Cardiac septum (tissue), 1 donor: ENCODE measurements at regions of chr9 and their contacts with region 1.

Region 1: DNA sequence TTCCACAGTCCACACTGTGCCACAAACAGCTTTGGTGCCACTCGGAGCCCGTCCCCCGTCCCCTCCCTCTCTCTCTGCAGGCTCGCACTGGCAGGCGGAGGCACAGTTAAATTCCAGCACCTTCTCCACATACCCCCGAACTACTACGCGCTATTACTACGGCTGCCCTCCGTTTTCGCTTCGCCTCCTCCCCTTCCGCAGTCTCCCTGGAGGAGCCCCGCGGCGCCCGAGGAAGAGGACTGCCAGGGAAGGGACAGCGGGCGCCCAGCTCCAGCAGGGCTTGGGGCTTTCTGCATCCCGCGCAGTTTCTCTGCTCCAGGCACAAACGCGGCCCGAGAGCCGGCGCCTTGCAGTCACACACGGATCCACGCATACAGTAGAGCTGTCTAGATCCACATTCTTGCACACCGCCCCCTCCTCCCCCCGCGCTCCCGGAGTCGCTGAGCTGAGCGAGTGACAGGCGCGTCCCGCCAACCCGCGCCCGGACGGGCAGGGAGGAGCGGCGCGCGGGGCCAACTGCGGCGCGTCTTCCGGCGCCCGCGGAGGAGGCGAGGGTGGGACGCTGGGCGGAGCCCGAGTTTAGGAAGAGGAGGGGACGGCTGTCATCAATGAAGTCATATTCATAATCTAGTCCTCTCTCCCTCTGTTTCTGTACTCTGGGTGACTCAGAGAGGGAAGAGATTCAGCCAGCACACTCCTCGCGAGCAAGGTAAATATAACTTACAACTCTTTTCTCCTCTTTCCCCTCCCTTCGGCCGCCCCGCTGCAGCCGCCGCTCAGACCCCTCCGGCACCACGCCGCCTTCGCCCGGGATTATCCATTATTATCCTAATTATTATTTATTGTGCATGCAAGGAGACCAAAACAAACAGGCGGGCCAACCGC is at the start of gene SMARCA2:
- DNase-seq: peak; percentile 99
- total RNA-seq, gene SMARCA2: 105 TPM

Region 2: DNA sequence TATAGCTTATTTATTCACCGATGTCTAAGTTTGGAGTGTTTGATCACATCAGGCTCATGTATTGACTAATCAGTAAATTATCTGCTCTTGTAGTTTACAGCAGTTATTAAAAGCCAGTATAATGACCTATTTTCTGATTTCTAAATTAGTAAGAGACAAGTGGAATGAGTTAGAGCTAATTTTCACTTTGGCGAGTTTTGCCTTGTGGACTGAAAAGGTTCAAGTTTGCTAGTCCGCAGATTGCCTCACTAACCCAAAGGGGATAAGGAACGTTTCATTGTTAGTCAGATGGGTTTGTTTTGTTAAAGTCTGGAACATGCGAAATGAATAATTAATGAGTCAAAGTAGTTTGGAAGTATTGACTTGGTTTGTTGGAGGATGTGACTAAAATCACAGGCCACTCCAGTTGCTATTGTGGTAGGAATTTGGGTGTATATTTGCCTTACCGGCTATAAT is 40.3 kb after region 1 on chr9:
- intact Hi-C with region 1: loop called (anchors 5 kb)
- DNase-seq: no peak

Region 3: GRCh38 chr9:2066312-2067273 is 51.7 kb after region 1 on chr9:
- intact Hi-C with region 1: loop called (anchors 2 kb)
- DNase-seq: no peak

Region 4: GRCh38 chr9:2849941-2850340 is 835.0 kb after region 1 on chr9:
- intact Hi-C with region 1: loop called (anchors 10 kb)
- DNase-seq: no peak